ENCODE measurements at regions of chr2 and their contacts with region 1.

Region 1: DNA sequence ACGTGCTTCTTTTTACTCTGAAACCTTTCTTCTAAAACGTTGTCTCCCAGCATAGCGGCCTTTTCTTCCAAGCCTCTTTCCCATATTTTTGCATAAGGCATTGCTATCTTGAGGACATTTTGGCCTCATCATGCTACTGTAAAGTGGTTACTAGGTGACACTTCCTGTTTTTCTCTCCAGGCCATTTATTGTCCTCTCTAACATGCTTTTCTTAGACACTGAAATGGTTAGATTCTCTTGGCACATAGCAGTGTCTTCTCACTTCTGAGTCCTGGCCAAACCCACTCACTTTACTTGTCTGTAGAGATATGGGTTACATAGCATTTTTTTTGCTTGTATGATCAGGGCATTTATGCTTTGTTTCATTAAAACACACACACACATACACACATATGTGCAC is 50.1 kb upstream of the KCNH7 start:
- DNase-seq: no peak

Region 2: DNA sequence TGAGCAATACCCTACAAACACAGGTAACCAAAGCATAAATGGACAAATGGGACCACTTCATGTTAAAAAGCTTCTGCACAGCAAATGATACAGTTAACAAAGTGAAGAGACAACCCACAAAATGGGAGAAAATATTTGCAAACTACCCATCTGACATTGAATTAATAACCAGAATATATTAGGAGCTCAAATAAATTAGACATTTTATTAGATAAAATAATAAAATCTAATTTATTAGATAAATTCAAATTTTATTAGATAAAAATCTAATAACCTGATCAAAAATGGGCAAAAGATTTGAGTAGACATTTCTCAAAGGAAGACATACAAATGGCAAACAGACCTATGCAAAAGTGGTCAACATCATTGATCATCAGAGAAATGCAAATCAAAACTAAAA is 14.2 kb before region 1 on chr2:
- intact Hi-C with region 1: loop called in 1 of 2 experiments (anchors 1 kb)
- DNase-seq: no peak